Panc1 (cell line): ENCODE measurements at regions of chr2 and their contacts with region 1.

Region 1: DNA sequence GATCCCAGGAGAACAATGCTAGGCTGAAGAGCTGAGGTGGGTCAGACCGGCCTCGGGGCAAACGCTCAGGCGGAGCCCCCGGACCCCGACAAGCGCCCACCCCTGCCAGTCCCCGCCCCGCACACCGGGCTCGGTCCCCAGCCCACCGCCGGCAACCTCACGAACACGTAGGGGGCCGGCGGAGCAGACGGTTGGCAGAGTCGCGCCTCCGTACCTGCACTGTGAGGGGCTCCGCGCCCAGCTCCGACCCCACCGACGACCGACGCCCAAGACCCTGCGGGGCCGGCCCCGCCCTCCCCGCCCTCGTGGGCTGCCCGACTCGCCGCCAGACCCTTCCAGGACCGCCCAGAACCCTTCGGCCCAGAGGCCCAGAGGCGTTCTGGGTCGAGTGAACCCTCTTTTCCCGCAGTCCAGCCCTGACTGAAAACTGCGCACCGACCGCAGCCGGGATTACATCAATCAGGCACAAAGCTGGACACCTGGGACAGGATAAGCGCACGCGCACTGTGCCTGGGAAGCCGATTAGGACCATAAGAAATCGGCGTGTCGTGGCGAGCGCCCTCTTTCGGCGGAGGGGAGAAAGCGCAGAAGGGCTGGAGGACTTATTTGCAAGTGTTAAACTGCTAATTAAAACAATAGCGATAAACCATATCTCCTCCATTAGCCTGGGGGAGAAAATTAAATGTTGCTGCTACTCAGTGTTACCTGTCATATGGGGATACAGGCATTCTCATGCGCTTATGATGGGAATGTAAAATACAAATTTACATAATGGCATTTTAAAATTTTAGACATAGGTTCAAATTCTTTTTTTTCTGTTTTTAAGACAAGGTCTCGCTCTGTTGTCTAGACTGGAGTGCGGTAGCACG is 11.7 kb upstream of the DCTN1 start:
- DNase-seq: peak; percentile 87
- ATAC-seq: peak; percentile 92
- H3K4me3 ChIP-seq: peak overlapping the region; percentile 91 to 99
- H3K27ac ChIP-seq: peak overlapping the region; percentile 94
- H3K4me1 ChIP-seq: peaks cover 21% of the 10 kb centered on the region
- H3K27me3 ChIP-seq: no peaks in the 10 kb centered on the region
- CTCF ChIP-seq: peak; percentile 99

Region 2: GRCh38 chr2:74104839-74105238 is 287.0 kb before region 1 on chr2:
- CTCF ChIA-PET with region 1: no interaction called
- POLR2A ChIA-PET with region 1: no interaction called
- in situ Hi-C with region 1: no loop called
- intact Hi-C with region 1: no loop called
- DNase-seq: no peak
- ATAC-seq: no peak
- H3K4me3 ChIP-seq: no peak overlapping the region
- H3K27ac ChIP-seq: no peak overlapping the region
- H3K4me1 ChIP-seq: no peaks in the 10 kb centered on the region
- H3K27me3 ChIP-seq: no peaks in the 10 kb centered on the region
- CTCF ChIP-seq: no peak

Region 3: GRCh38 chr2:74250189-74250631 is 141.6 kb before region 1 on chr2:
- CTCF ChIA-PET with region 1: interaction called, 4 read pairs
- POLR2A ChIA-PET with region 1: no interaction called
- in situ Hi-C with region 1: no loop called
- intact Hi-C with region 1: loop called (anchors 5 kb)
- DNase-seq: peak; percentile 17
- ATAC-seq: peak; percentile 83
- H3K4me3 ChIP-seq: no peak overlapping the region
- H3K27ac ChIP-seq: no peak overlapping the region
- H3K4me1 ChIP-seq: no peaks in the 10 kb centered on the region
- H3K27me3 ChIP-seq: no peaks in the 10 kb centered on the region
- CTCF ChIP-seq: peak; percentile 89

Region 4: DNA sequence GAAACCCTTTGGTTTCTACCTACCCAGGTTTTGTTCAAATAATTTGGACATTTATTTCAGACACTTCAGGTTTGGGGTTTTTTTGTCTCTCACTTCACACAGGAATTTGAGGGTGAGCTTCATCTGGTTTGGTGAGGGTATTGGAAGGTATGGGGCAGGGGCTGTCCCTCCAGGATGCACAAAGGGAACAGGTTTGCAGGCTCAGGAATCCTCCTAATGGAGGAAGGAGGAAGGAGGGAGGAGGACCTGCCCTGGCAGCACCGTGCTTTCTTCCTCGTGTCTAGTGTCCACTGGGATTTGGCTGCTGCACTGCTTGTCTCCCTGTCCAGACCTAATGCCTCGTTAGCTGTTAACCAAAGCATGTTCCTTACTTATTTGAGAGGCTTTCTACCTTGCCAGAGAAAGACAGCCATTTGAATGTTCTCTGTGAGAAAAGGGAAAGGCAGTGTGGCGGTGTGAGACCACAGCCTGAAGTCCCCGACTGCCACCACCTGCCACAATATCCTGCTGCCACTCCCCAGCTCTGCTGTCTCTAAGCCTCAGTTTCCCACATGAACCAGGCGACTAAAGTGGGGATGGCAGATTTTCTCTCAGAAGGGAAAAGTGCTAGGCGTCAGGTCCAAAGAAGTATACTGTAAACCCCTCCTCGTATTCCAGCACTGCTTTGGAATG is 46.4 kb before region 1 on chr2:
- CTCF ChIA-PET with region 1: no interaction called
- POLR2A ChIA-PET with region 1: interaction called, 10 read pairs
- in situ Hi-C with region 1: no loop called
- intact Hi-C with region 1: no loop called
- DNase-seq: no peak
- ATAC-seq: 0 out of 2 replicates have a peak, but pooled peaks have one; percentile 48
- H3K4me3 ChIP-seq: no peak overlapping the region
- H3K27ac ChIP-seq: no peak overlapping the region
- H3K4me1 ChIP-seq: no peaks in the 10 kb centered on the region
- H3K27me3 ChIP-seq: no peaks in the 10 kb centered on the region
- CTCF ChIP-seq: no peak